BJ (cell line): ENCODE measurements at regions of chr16 and their contacts with region 1.

Region 1: DNA sequence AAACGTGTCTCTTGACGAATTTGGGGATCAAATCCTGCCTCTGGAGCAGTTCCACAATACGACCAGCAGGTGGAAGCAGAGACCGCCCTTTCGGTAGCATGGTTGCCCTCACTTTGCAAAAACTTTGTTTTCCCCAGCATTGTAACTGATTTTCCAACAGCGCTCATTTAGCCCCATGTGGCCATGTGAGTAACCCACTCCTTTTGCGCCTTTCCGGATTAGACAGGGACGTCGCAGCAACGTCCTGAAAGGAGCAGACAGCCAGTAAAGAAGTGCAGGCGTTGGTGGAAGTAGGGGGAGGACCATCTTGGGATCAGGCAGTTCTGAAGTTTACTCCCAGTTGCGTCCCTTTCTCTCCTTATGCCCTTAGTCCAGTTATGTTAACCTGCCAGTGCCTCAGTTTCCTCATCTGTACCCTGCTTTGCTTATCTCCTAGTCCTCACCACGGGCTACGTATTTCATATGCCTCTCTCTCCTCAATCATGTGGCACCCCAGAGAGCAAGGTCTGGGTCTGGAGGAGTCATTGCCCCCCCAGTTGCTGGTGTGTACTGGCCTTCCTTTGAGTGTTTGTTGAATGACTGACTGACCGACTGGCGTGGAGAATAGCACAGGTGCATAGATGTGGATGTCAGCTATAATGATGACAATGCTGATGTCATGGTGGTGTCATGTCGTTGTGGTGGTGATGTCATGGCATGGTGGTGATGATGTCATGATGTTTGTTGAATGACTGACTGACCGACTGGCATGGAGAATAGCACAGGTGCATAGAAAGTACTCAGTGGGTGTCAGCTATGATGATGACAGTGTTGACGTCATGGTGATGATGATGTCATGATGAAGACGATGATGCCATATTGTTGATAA is 22.3 kb downstream of the TMEM114 start:
- DNase-seq: peak; percentile 22
- H3K4me3 ChIP-seq: no peak overlapping the region
- H3K27me3 ChIP-seq: no peaks in the 10 kb centered on the region; the same call in 1 of the 2 replicates
- CTCF ChIP-seq: peak; percentile 92

Region 2: GRCh38 chr16:8502446-8502845 is 65.5 kb before region 1 on chr16:
- CTCF ChIA-PET with region 1: no interaction called
- POLR2A ChIA-PET with region 1: no interaction called
- DNase-seq: no peak
- H3K4me3 ChIP-seq: no peak overlapping the region
- H3K27me3 ChIP-seq: no peaks in the 10 kb centered on the region
- CTCF ChIP-seq: no peak

Region 3: GRCh38 chr16:8512941-8513624 is 54.9 kb before region 1 on chr16:
- CTCF ChIA-PET with region 1: no interaction called
- POLR2A ChIA-PET with region 1: no interaction called
- DNase-seq: no peak
- H3K4me3 ChIP-seq: no peak overlapping the region
- H3K27me3 ChIP-seq: no peaks in the 10 kb centered on the region
- CTCF ChIP-seq: no peak

Region 4: GRCh38 chr16:8655184-8655717 is 87.3 kb after region 1 on chr16:
- CTCF ChIA-PET with region 1: interaction called, 32 read pairs
- POLR2A ChIA-PET with region 1: no interaction called
- DNase-seq: no peak
- H3K4me3 ChIP-seq: no peak overlapping the region
- H3K27me3 ChIP-seq: no peaks in the 10 kb centered on the region; the same call in 1 of the 2 replicates
- CTCF ChIP-seq: peak; percentile 58